ENCODE measurements at regions of chr17 and their contacts with region 1.

Region 1: DNA sequence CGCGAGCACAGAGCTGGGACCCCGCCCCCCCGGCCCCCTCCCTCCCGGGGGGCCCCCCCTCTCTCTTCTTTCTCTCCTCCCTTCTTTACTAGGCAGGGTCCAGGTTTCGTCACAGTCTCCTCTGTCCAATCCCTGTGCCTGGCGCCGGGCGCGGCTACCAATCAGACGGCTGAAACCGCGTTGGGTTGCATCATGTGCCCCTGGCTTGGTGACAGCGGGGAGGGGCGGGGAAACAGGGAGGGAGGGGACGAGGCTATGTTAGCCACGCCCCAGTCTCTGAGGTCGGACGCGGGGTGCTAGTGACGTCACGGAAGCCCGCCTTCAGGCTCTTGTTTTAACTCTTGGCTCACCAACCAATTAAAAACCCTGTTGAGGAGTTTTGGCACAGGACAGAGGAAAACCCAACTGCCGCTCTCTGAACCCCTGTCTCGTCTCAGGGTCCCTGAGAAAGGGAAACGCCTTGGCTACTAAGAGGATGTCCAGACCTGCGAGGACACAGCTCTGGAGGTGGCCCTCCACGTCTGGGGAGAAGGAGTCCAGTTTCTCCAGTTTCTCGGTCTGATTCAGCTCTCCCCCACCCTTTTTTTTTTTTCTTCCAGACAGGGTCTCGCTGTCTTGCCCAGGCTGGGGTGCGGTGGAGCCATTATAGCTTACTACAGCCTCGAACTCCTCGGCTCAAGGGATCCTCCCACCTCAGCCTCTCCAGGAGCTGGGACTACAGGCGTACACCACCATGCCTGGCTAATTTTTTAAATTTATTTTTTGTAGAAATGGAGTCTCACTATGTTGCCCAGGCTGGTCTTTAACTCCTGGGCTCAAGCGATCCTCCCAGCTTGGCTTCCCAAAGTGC is 439 bp upstream of the PLEKHH3 start:
- H3K4me3 ChIP-seq: peak overlapping the region; percentile 82
- H3K27ac ChIP-seq: peak overlapping the region; percentile 90
- H3K4me1 ChIP-seq: peaks cover 21% of the 10 kb centered on the region
- CTCF ChIP-seq: no peak

Region 2: DNA sequence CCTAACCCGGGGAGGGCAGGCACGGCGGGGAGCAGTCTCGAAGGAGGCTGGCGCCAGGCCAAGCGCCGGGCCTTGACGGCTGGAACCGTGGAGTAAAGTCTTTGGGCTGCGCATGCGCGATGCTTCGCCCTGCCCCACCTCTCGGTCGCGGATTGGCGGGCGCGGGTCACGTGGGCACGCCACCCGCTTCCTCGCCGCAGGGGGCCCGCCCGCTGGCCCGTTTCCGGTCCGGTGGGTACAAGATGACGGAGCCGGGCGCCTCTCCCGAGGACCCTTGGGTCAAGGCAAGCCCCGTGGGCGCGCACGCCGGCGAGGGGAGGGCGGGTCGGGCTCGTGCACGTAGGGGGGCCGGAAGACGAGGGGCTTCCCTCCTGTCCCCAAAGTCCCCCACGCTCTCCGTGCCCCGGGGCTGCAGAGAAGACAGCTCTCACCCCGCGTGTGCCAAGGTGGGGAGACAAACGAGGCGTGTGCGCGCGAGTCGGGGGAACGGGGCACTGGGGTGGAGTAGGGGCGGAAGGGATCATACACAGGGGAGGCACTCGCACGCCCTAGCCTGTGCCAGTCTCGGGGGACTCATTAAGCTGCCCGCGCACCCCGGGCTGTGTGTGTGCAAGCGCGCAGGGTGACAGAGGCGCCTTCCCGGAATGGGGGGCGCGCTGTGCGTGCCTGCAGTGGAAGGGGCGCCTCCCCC is 110.2 kb before region 1 on chr17 and contains the start of gene MLX:
- CTCF ChIA-PET with region 1: no interaction called
- POLR2A ChIA-PET with region 1: no interaction called
- H3K4me3 ChIP-seq: peak within 1 kb of the TSS; percentile 86
- H3K27ac ChIP-seq: peak within 1 kb of the TSS; percentile 86
- H3K4me1 ChIP-seq: peaks cover 10% of the 10 kb centered on the region; the same call in 1 of the 2 replicates
- CTCF ChIP-seq: peak; percentile 86

Region 3: DNA sequence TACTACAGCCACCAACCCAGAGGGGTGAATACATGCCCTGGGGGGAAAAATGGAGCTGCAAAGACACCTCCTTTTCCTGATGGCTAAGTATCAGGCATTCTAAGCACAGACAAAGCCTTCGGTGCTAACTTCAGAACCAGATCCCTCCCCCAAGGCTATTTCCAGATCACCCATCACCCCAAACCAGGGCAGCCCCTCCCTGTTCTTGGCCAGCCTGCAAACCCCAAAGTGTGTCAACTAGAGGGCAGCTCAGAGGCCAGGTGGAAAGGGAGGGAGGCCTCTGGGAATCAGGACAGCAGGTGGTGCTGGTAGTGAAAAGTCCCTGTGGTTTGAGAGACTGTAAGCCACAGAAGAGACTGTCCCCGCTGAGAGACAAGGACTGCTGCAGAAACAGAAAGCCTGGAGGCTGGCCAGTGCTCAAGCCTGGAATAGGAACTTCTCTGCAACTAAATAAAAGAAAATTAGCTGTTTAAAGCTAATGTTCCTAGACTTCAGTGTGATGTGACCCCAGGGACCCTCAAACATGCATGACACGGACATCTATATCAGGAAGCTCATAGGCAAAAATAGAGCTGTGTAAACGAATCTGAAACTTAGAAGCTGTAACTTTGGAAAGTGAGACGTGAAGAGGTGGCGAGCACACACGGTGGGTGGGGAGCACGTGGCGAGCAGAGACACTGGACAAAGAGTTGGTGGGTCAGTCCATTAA is 58.6 kb before region 1 on chr17:
- CTCF ChIA-PET with region 1: interaction called, 8 read pairs
- POLR2A ChIA-PET with region 1: interaction called, 13 read pairs
- H3K4me3 ChIP-seq: no peak overlapping the region
- H3K27ac ChIP-seq: no peak overlapping the region
- H3K4me1 ChIP-seq: no peaks in the 10 kb centered on the region
- CTCF ChIP-seq: peak; percentile 90

Region 4: GRCh38 chr17:42659079-42659931 is 17.9 kb before region 1 on chr17 and contains the start of gene TUBG2:
- CTCF ChIA-PET with region 1: interaction called, 18 read pairs
- POLR2A ChIA-PET with region 1: interaction called, 19 read pairs
- H3K4me3 ChIP-seq: peak within 1 kb of the TSS; percentile 70
- H3K27ac ChIP-seq: peak within 1 kb of the TSS; percentile 84
- H3K4me1 ChIP-seq: peaks cover 13% of the 10 kb centered on the region
- CTCF ChIP-seq: no peak

Region 5: GRCh38 chr17:43051969-43052368 is 374.7 kb after region 1 on chr17:
- CTCF ChIA-PET with region 1: no interaction called
- POLR2A ChIA-PET with region 1: no interaction called
- H3K4me3 ChIP-seq: no peak overlapping the region
- H3K27ac ChIP-seq: no peak overlapping the region
- H3K4me1 ChIP-seq: no peaks in the 10 kb centered on the region
- CTCF ChIP-seq: no peak

Measured in HEK293 (cell line).